ENCODE measurements at regions of chr2 and their contacts with region 1.

Region 1: DNA sequence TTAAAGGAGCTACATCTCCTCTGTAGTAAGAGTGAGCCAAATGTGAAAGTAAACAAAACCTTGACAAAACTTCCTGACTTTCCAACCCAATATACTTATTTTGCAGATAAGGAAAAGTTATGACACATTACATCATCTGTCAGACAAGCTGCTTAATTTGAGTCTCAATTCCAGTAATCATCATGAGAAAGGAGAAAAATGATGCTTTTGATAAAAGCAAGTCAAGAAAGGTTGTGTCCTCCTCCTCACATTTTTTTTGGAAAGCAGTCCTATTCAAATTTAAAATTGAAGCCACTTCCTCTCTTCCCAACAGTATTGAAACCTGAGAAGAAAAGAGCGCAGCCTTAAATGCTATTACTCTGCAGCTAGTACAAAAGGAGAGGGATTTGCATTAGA is 519.6 kb downstream of the LRP1B start:
- DNase-seq: peak; percentile 52
- H3K4me3 ChIP-seq: peak overlapping the region; percentile 29
- H3K27ac ChIP-seq: peak overlapping the region; percentile 52
- H3K4me1 ChIP-seq: peaks cover 17% of the 10 kb centered on the region
- H3K27me3 ChIP-seq: no peaks in the 10 kb centered on the region
- CTCF ChIP-seq: no peak

Region 2: GRCh38 chr2:141259683-141260082 is 351.5 kb before region 1 on chr2:
- CTCF ChIA-PET with region 1: no interaction called
- POLR2A ChIA-PET with region 1: no interaction called
- intact Hi-C with region 1: loop called (anchors 5 kb)
- DNase-seq: no peak
- H3K4me3 ChIP-seq: no peak overlapping the region
- H3K27ac ChIP-seq: no peak overlapping the region
- H3K4me1 ChIP-seq: no peaks in the 10 kb centered on the region
- H3K27me3 ChIP-seq: no peaks in the 10 kb centered on the region
- CTCF ChIP-seq: no peak

Region 3: DNA sequence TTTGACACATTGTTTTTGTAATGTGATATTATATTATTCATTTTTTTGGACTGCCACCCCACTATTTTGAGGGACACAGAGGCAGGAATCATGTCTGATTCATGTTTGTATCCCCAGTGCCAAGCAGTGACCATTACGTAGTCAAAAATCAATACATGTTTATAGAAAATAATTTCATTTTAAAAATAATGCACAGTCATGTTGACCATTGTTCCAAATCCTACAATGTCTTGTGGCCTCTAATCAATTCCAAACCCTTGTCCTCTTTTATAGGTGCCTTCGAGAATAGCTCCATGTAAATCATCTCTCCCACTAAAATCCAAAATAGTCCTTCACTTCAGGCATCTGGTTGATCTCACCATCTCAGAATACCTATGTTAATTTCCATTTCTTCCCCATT is 65.0 kb after region 1 on chr2:
- CTCF ChIA-PET with region 1: no interaction called
- POLR2A ChIA-PET with region 1: no interaction called
- intact Hi-C with region 1: no loop called
- DNase-seq: no peak
- H3K4me3 ChIP-seq: no peak overlapping the region
- H3K27ac ChIP-seq: no peak overlapping the region
- H3K4me1 ChIP-seq: no peaks in the 10 kb centered on the region
- H3K27me3 ChIP-seq: no peaks in the 10 kb centered on the region
- CTCF ChIP-seq: no peak

Measured in A673 (cell line).